ENCODE measurements at regions of chr18 and their contacts with region 1.

Region 1: DNA sequence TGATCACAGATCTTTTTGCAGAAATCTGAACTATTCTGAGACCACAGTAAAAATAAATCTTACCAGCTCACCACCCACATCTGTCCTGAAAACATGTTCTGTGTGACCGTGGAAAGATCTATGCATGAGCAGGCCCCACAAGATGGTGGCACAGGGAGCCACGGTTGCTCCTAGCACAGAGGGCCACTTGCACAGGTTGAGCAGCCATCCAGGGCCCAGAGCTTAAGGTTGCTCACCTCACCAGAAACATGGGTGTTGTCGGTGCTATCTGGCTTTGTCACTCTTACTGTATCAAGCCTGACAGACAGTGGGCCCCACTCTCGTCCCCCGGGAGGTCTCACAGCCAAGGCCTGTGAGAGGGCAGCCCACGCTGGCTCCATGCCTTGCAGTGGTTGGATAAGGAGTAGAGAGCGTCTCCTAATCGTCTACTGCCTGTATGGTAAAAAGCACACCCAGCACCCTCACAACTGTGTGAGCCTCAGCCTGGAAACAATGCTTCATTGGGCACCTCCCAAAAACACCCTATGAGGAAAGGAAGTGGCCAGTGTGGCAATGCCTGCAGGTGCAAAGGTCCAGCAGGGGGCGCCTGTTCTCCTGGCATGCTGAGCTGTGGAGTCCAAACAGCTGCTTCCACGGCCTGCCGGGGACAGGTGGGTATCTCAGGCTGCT is 19.6 kb downstream of the TUBB6 start:
- DNase-seq: peak; percentile 86
- H3K4me3 Mint-ChIP-seq: no peak overlapping the region
- H3K27ac Mint-ChIP-seq: peak overlapping the region; percentile 35
- H3K4me1 Mint-ChIP-seq: no peaks in the 10 kb centered on the region
- H3K27me3 Mint-ChIP-seq: no peaks in the 10 kb centered on the region
- CTCF ChIP-seq: peak; percentile 90

Region 2: DNA sequence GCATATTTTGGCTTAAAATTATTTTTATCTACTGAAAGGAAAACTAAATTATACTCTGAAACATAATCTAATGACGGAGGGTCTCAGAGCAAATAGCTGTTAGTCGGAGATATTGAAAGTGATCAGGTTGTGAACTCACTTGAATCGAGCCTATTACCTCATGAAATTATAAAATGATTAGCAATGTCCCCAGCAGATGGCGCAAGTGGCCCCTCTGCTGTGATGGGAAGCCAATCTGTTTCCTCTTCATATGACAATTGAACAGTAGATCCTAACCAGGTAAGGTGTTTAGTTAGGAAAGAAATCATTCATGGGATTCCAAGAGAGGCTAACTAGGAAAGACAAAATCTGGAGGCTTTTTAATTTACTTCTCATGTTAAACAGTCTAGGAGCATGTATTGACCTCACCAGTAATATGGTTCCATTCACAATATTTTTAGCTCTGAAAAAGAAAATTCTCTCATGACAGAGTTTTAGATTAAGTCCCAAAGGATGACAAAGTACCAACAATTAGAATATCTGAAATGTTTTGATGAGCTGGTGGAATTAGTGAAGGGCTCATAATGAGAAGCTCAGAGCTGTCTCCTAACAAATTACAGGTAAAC is 389.7 kb before region 1 on chr18:
- CTCF ChIA-PET with region 1: no interaction called
- POLR2A ChIA-PET with region 1: no interaction called
- intact Hi-C with region 1: no loop called
- DNase-seq: peak; percentile 80
- H3K4me3 Mint-ChIP-seq: no peak overlapping the region
- H3K27ac Mint-ChIP-seq: no peak overlapping the region
- H3K4me1 Mint-ChIP-seq: peaks cover 13% of the 10 kb centered on the region
- H3K27me3 Mint-ChIP-seq: no peaks in the 10 kb centered on the region
- CTCF ChIP-seq: peak; percentile 73

Region 3: DNA sequence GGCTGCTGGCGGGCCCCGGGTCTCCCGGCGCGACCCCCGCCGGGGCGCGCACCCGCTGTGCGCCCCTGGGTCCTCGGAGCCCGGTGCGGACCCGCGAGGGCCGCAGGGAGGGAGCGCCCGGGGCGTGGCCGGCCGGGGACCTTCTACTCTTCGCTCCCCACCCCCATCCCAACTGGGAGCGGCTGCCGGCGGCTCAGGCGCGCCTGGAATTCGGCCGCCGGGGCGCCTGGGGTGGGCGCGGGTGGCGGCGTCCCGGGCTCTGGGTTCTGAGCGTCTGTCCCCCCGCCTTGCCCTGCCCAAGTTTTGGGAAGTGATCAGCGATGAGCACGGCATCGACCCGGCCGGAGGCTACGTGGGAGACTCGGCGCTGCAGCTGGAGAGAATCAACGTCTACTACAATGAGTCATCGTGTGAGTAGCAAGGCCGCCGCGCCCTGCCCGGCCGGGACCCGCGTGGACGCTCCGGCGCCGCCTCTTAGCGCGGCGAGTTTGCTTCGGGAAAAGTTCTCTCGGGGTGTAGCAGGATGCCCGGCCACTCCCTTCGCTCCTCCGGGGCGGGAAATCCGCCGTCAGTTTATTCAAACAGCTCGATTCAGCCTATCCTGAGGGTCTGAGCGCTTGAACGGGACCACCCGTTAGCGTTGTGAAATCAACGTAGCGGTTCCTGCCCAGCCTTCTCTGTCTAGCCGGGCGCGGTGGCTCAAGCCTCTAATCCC is 19.1 kb before region 1 on chr18:
- CTCF ChIA-PET with region 1: interaction called, 21 read pairs
- POLR2A ChIA-PET with region 1: interaction called, 5 read pairs
- intact Hi-C with region 1: no loop called
- DNase-seq: peak; percentile 85
- H3K4me3 Mint-ChIP-seq: peak overlapping the region; percentile 86
- H3K27ac Mint-ChIP-seq: peak overlapping the region; percentile 87
- H3K4me1 Mint-ChIP-seq: peaks cover 20% of the 10 kb centered on the region
- H3K27me3 Mint-ChIP-seq: no peaks in the 10 kb centered on the region
- CTCF ChIP-seq: no peak

Measured in MCF 10A (cell line).